MCF 10A (cell line): ENCODE measurements at regions of chr16 and their contacts with region 1.

Region 1: GRCh38 chr16:4330277-4330874 is 14.5 kb downstream of the GLIS2 start:
- DNase-seq: peak; percentile 76
- H3K4me3 Mint-ChIP-seq: no peak overlapping the region
- H3K27ac Mint-ChIP-seq: no peak overlapping the region
- H3K4me1 Mint-ChIP-seq: no peaks in the 10 kb centered on the region
- H3K27me3 Mint-ChIP-seq: no peaks in the 10 kb centered on the region
- CTCF ChIP-seq: peak; percentile 98

Region 2: GRCh38 chr16:4200000-4200780 is 130.2 kb before region 1 on chr16:
- CTCF ChIA-PET with region 1: interaction called, 22 read pairs
- POLR2A ChIA-PET with region 1: interaction called, 3 read pairs
- intact Hi-C with region 1: loop called (anchors 1 kb)
- DNase-seq: peak; percentile 80
- H3K4me3 Mint-ChIP-seq: no peak overlapping the region
- H3K27ac Mint-ChIP-seq: no peak overlapping the region
- H3K4me1 Mint-ChIP-seq: peaks cover 10% of the 10 kb centered on the region
- H3K27me3 Mint-ChIP-seq: no peaks in the 10 kb centered on the region
- CTCF ChIP-seq: peak; percentile 84

Region 3: DNA sequence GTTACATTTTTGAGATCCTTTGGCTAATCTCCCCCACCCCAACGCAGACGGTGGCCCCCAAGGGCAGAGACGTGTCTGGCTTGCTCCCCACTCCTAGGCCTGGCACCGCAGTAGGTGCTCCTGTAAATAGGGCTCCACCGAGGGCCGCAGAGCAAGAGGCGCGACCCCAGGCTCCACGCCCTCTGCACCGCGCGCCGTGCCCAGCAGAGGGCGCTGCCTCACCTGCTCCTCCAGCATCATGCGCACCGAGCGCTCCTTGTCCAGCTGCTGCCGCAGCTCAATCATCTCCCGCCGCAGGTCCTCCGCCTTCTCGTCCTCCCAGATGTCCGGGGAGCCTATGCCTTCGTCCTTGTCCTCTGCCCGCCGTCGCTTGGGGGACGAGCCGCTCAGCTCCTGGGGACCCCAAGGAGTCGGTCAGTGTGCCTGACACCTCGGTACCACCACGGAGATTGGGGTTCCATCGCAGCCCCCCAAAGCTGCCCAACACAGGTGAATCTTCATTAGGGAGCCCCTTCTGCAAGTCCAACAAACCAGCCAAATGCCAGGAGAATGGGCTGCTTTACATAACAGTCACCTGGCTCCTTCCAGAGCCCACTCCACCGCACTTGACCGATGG is 68.7 kb before region 1 on chr16:
- CTCF ChIA-PET with region 1: interaction called, 5 read pairs
- POLR2A ChIA-PET with region 1: no interaction called
- intact Hi-C with region 1: loop called (anchors 2 kb)
- DNase-seq: peak; percentile 23
- H3K4me3 Mint-ChIP-seq: no peak overlapping the region
- H3K27ac Mint-ChIP-seq: no peak overlapping the region
- H3K4me1 Mint-ChIP-seq: peaks cover 5% of the 10 kb centered on the region
- H3K27me3 Mint-ChIP-seq: no peaks in the 10 kb centered on the region
- CTCF ChIP-seq: peak; percentile 75

Region 4: GRCh38 chr16:4307215-4308037 is 22.9 kb before region 1 on chr16:
- CTCF ChIA-PET with region 1: interaction called, 7 read pairs
- POLR2A ChIA-PET with region 1: no interaction called
- intact Hi-C with region 1: loop called (anchors 1 kb)
- DNase-seq: peak; percentile 95
- H3K4me3 Mint-ChIP-seq: peak overlapping the region; percentile 84
- H3K27ac Mint-ChIP-seq: peak overlapping the region; percentile 92
- H3K4me1 Mint-ChIP-seq: peaks cover 8% of the 10 kb centered on the region
- H3K27me3 Mint-ChIP-seq: no peaks in the 10 kb centered on the region
- CTCF ChIP-seq: no peak

Region 5: DNA sequence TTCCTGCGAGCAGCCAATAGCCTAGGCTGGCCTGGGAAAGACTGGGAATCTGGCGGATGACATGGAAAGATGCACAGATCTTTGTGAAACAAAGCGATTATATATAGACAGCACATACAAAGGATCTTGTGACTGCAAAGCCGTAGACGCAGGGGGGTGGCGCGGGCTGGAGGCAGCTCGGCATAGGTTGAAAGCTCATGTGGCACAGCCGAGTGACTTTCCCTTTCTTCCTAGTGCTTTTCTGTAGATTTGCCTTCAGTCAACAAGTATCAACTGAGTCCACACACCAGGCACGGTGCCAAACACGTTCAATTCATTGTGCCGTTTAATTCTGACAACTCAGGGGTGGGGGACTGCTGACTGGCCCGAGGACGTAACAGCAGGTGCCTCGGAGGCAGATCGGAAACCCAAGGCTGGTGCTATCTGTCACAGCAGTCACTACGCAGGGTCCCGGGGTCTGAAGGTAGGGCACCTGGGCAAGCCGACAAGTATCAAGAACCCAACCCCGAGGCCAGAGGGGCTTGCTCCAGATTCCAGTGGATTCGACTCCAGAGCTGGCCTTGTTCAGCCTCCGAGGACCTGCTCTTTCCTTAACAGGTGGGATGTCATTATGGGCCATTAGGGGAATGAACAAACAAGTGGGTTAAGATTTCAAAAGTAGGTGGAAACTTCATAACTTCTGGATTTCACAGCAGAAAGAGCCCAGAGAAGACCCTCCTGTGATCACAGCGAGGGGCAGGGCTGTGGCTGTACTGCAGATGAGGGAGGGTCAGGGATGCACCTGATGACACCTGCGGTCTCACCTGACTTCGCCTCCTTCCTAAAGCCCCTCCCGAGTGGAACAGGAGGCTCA is 14.8 kb after region 1 on chr16:
- CTCF ChIA-PET with region 1: interaction called, 20 read pairs
- POLR2A ChIA-PET with region 1: interaction called, 3 read pairs
- intact Hi-C with region 1: no loop called
- DNase-seq: no peak
- H3K4me3 Mint-ChIP-seq: no peak overlapping the region
- H3K27ac Mint-ChIP-seq: no peak overlapping the region
- H3K4me1 Mint-ChIP-seq: peaks cover 8% of the 10 kb centered on the region
- H3K27me3 Mint-ChIP-seq: no peaks in the 10 kb centered on the region
- CTCF ChIP-seq: no peak

Region 6: GRCh38 chr16:6165330-6165979 is 1835.1 kb after region 1 on chr16:
- CTCF ChIA-PET with region 1: no interaction called
- POLR2A ChIA-PET with region 1: no interaction called
- intact Hi-C with region 1: no loop called
- DNase-seq: no peak
- H3K4me3 Mint-ChIP-seq: no peak overlapping the region
- H3K27ac Mint-ChIP-seq: no peak overlapping the region
- H3K4me1 Mint-ChIP-seq: no peaks in the 10 kb centered on the region
- H3K27me3 Mint-ChIP-seq: no peaks in the 10 kb centered on the region
- CTCF ChIP-seq: no peak